CD8-positive, alpha-beta memory T cell (primary cell): ENCODE measurements at regions of chr7 and their contacts with region 1.

Region 1: GRCh38 chr7:140479062-140479738 is at the start of gene MKRN1:
- DNase-seq: peak; percentile 83 to 94 (median 88)
- H3K4me3 ChIP-seq: peak within 1 kb of the TSS; percentile 75
- H3K4me3 Mint-ChIP-seq: peak within 1 kb of the TSS; percentile 94 to 100 (median 99)
- H3K27ac ChIP-seq: peak within 1 kb of the TSS; percentile 88
- H3K27ac Mint-ChIP-seq: peak within 1 kb of the TSS; percentile 90 to 99 (median 97)
- H3K4me1 ChIP-seq: peaks cover 26% of the 10 kb centered on the region
- H3K4me1 Mint-ChIP-seq: peaks cover 23 to 35% (median 34%) of the 10 kb centered on the region in 3 donors
- H3K27me3 ChIP-seq: no peaks in the 10 kb centered on the region
- H3K27me3 Mint-ChIP-seq: peaks cover 0 to 5% of the 10 kb centered on the region in 2 donors
- total RNA-seq, gene MKRN1: 66.3 to 67.5 TPM

Region 2: GRCh38 chr7:140494867-140495266 is 15.7 kb after region 1 on chr7:
- CTCF ChIA-PET with region 1: interaction called, 83 read pairs
- POLR2A ChIA-PET with region 1: interaction called, 3 read pairs
- DNase-seq: no peak
- H3K4me3 ChIP-seq: no peak overlapping the region
- H3K4me3 Mint-ChIP-seq: no peak overlapping the region
- H3K27ac ChIP-seq: no peak overlapping the region
- H3K27ac Mint-ChIP-seq: no peak overlapping the region
- H3K4me1 ChIP-seq: no peaks in the 10 kb centered on the region
- H3K4me1 Mint-ChIP-seq: peaks cover 0 to 3% (median 0%) of the 10 kb centered on the region in 3 donors
- H3K27me3 ChIP-seq: no peaks in the 10 kb centered on the region
- H3K27me3 Mint-ChIP-seq: peaks cover 0 to 3% of the 10 kb centered on the region in 2 donors

Region 3: DNA sequence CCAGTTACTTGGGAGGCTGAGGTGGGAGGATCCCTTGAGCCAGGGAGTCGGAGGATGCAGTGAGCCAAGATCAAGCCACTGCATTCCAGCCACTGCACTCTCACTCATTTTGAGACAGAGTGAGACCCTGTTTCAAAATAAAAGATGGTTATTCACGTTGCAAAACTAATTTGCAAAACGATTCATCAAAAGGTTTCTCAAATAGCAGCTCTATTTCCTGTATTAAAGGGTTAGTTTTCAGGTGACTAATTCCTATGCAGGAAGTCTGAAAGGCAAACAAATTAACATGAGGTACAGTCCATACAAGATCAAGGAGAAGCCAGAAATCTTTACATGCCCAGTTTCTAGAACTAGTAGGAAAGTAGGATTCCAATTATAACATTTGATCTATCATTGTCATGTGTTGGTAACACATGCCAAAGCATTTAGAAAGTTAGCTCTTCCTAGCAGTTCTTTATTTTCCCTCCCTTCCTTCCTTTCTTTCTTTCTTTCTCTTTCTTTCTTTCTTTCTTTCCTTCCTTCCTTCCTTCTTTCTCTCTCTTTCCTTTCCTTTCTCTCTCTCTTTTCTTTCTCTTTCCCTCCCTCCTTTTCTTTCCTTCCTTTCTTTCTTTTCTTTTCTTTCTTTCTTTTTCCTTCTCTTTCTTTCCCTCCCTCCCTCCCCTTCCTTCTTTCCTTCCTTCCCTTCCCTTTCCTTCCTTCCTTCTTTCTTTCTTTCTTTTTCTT is 112.1 kb after region 1 on chr7:
- CTCF ChIA-PET with region 1: no interaction called
- POLR2A ChIA-PET with region 1: no interaction called
- DNase-seq: no peak
- H3K4me3 ChIP-seq: no peak overlapping the region
- H3K4me3 Mint-ChIP-seq: no peak overlapping the region
- H3K27ac ChIP-seq: no peak overlapping the region
- H3K27ac Mint-ChIP-seq: peak overlapping the region in 1 of 8 donors; percentile 66
- H3K4me1 ChIP-seq: no peaks in the 10 kb centered on the region
- H3K4me1 Mint-ChIP-seq: peaks cover 8 to 16% (median 9%) of the 10 kb centered on the region in 3 donors
- H3K27me3 ChIP-seq: peaks cover 9% of the 10 kb centered on the region
- H3K27me3 Mint-ChIP-seq: peaks cover 9 to 26% of the 10 kb centered on the region in 2 donors

Region 4: GRCh38 chr7:140653319-140654108 is 174.3 kb after region 1 on chr7:
- CTCF ChIA-PET with region 1: interaction called, 12 read pairs
- POLR2A ChIA-PET with region 1: no interaction called
- DNase-seq: peak in 3 of 5 donors; percentile 21 to 38 (median 21)
- H3K4me3 ChIP-seq: no peak overlapping the region
- H3K4me3 Mint-ChIP-seq: peak overlapping the region in 1 of 7 donors; percentile 31
- H3K27ac ChIP-seq: no peak overlapping the region
- H3K27ac Mint-ChIP-seq: no peak overlapping the region
- H3K4me1 ChIP-seq: peaks cover 18% of the 10 kb centered on the region
- H3K4me1 Mint-ChIP-seq: peaks cover 15 to 26% (median 19%) of the 10 kb centered on the region in 3 donors
- H3K27me3 ChIP-seq: no peaks in the 10 kb centered on the region
- H3K27me3 Mint-ChIP-seq: peaks cover 9 to 15% of the 10 kb centered on the region in 2 donors